ENCODE measurements at regions of chr12 and their contacts with region 1.

Region 1: DNA sequence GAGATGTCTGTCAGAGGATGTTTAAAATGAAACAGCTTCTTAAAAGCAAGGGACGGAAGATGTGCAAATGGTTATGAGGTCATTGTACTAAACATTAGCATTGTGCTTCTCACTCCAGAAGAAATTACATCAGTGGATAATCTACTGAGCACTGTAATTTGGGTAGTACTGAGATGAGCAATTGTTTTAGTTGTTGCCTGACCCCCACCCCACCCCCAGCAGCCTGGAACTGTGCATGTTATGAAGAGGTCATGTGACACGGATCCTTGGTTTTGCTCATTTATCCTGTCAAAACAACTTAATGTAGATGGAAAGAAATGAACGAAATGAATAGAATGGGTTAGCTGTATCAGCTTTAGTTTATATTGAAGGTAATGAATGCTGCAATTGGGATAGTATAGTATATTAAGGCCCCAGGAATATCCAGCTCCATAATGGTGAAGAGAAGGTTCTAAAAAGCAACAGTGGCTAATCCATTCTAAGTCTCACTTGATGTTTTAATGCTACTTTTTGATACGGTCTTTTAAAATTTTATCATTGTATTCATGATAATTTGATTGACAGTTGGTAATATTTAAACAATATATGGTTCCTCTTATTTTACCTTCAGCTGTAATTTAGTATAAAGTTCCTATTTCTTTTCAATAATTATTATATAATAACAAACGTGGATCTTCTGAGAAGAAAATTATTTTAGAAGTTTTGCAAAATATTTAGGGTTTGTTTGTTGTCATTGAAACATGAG is 58.5 kb downstream of the WNK1 start:
- DNase-seq: no peak
- ATAC-seq: no peak
- H3K4me3 ChIP-seq: no peak overlapping the region
- H3K27ac ChIP-seq: no peak overlapping the region
- H3K4me1 ChIP-seq: peaks cover 64% of the 10 kb centered on the region
- CTCF ChIP-seq: no peak
- EP300 ChIP-seq: no peak
- POLR2A ChIP-seq: no peak
- RAD21 ChIP-seq: no peak

Region 2: GRCh38 chr12:777550-778047 is 33.2 kb before region 1 on chr12:
- CTCF ChIA-PET with region 1: interaction called, 15 read pairs
- POLR2A ChIA-PET with region 1: no interaction called
- DNase-seq: no peak
- ATAC-seq: no peak
- H3K4me3 ChIP-seq: no peak overlapping the region
- H3K27ac ChIP-seq: no peak overlapping the region
- H3K4me1 ChIP-seq: peaks cover 86% of the 10 kb centered on the region
- CTCF ChIP-seq: no peak
- EP300 ChIP-seq: no peak
- POLR2A ChIP-seq: no peak
- RAD21 ChIP-seq: no peak

Region 3: GRCh38 chr12:835754-836518 is 25.1 kb after region 1 on chr12:
- CTCF ChIA-PET with region 1: interaction called, 14 read pairs
- POLR2A ChIA-PET with region 1: no interaction called
- DNase-seq: no peak
- ATAC-seq: no peak
- H3K4me3 ChIP-seq: no peak overlapping the region
- H3K27ac ChIP-seq: no peak overlapping the region
- H3K4me1 ChIP-seq: no peaks in the 10 kb centered on the region
- CTCF ChIP-seq: no peak
- EP300 ChIP-seq: no peak
- POLR2A ChIP-seq: no peak
- RAD21 ChIP-seq: no peak

Region 4: GRCh38 chr12:905261-906031 is 94.6 kb after region 1 on chr12:
- CTCF ChIA-PET with region 1: interaction called, 11 read pairs
- POLR2A ChIA-PET with region 1: no interaction called
- DNase-seq: no peak
- ATAC-seq: no peak
- H3K4me3 ChIP-seq: no peak overlapping the region
- H3K27ac ChIP-seq: no peak overlapping the region
- H3K4me1 ChIP-seq: no peaks in the 10 kb centered on the region
- CTCF ChIP-seq: no peak
- EP300 ChIP-seq: no peak
- POLR2A ChIP-seq: no peak
- RAD21 ChIP-seq: no peak

Measured in A549 (cell line).